MCF 10A (cell line): ENCODE measurements at regions of chr5 and their contacts with region 1.

Region 1: DNA sequence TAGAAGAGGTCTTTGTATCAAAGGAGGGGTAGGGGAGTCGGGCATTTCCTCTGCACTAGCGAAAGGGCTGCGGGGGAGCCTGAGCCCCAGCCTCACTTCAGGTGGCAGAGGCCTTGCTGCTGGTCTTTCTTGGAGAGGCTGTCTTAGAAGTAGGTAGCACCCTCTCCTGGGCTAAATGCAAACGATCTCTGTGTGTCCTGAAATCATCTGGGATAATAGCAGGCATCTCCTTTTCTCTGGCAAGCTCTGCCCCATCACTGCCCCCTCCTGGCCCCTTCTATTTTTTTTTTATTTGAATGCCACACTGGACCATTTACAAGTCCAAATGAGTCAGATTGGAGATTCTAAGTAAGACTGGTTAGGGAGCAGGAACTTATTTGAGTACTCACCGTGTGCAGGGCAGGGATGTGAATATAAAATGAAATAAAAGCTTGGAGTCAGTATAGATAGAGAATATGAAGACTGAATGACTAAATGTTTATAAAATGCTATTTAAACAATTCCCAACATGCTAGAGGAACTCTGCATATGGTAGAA is 137.1 kb downstream of the FGF1 start:
- DNase-seq: peak; percentile 97
- H3K4me3 Mint-ChIP-seq: no peak overlapping the region
- H3K27ac Mint-ChIP-seq: no peak overlapping the region
- H3K4me1 Mint-ChIP-seq: peaks cover 26% of the 10 kb centered on the region
- H3K27me3 Mint-ChIP-seq: no peaks in the 10 kb centered on the region
- CTCF ChIP-seq: peak; percentile 99

Region 2: DNA sequence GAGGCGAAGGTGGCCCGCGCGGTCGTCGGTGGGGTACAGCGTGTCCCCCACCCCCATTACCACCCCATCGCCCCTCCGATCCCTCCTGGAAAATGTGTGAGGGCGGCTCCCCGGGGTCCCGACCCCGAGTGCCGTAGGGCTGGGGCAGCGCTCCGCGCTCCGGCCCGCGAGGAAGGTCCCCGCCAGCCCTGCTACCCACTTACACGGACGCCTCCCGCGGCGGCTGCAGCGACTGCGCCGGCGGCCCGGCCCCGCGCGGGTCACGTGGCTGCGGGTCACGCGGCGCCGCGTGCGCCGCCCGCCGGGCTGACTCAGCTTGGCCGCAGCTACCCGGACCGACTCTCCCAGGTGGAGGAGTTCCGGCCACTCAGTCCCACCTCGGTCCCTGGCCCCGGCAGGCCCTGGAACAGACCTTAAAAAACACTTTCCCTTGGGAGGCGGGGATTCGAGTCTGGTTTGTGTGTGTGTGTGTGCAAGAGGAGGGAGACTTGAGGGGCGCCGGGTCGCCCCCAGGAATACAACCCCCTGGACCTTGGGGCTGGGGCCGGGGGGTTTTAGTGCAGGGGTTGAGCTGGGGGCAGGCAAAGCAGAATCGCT is 535.9 kb before region 1 on chr5 and contains the start of gene GNPDA1:
- CTCF ChIA-PET with region 1: interaction called, 3 read pairs
- POLR2A ChIA-PET with region 1: no interaction called
- intact Hi-C with region 1: loop called (anchors 5 kb)
- DNase-seq: peak; percentile 78
- H3K4me3 Mint-ChIP-seq: peak within 1 kb of the TSS; percentile 82
- H3K27ac Mint-ChIP-seq: peak within 1 kb of the TSS; percentile 82
- H3K4me1 Mint-ChIP-seq: peaks cover 35% of the 10 kb centered on the region
- H3K27me3 Mint-ChIP-seq: no peaks in the 10 kb centered on the region
- CTCF ChIP-seq: no peak
- total RNA-seq, gene GNPDA1: 36.1 and 60.9 TPM in 2 replicates

Region 3: GRCh38 chr5:142156839-142157463 is 391.9 kb before region 1 on chr5:
- CTCF ChIA-PET with region 1: interaction called, 158 read pairs
- POLR2A ChIA-PET with region 1: interaction called, 4 read pairs
- intact Hi-C with region 1: loop called (anchors 1 kb)
- DNase-seq: no peak
- H3K4me3 Mint-ChIP-seq: no peak overlapping the region
- H3K27ac Mint-ChIP-seq: no peak overlapping the region
- H3K4me1 Mint-ChIP-seq: no peaks in the 10 kb centered on the region
- H3K27me3 Mint-ChIP-seq: no peaks in the 10 kb centered on the region
- CTCF ChIP-seq: no peak

Region 4: GRCh38 chr5:142324871-142325724 is 223.7 kb before region 1 on chr5 and contains the start of gene SPRY4:
- CTCF ChIA-PET with region 1: interaction called, 49 read pairs
- POLR2A ChIA-PET with region 1: interaction called, 5 read pairs
- intact Hi-C with region 1: loop called (anchors 1 kb)
- DNase-seq: peak; percentile 100
- H3K4me3 Mint-ChIP-seq: peak within 1 kb of the TSS; percentile 76
- H3K27ac Mint-ChIP-seq: peak within 1 kb of the TSS; percentile 77
- H3K4me1 Mint-ChIP-seq: peaks cover 55% of the 10 kb centered on the region
- H3K27me3 Mint-ChIP-seq: no peaks in the 10 kb centered on the region
- CTCF ChIP-seq: peak; percentile 6
- total RNA-seq, gene SPRY4: 34.5 and 41.9 TPM in 2 replicates

Region 5: DNA sequence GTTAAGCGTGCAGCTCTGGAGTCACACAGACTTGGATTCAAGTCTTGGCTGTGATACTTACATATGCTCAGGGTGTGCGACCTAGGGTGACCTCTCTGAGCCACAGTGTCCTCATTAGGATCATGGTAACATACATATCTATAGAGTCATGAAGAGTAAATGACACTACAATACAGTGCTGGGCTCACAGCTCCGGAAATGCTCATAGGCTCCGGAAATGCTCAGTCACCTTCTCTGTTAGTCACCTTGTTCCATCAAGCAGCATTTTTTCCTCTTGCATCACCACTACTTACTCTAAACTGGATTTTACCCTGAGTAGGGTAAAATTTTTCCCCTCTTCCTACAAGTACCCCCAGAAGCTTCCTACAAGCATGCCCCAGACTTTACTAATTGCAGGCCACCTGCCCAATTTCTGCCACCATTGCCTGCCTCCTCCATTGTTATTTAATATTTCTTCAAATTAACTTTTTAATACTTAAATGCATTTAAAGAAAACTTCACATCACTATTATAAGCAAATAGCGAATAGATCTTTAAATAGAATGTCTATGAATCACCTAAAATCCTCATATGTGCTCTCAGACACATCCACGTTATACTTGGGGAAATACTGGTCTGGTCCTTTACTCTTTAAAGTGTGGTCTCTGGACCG is 76.4 kb before region 1 on chr5:
- CTCF ChIA-PET with region 1: interaction called, 5 read pairs
- POLR2A ChIA-PET with region 1: no interaction called
- intact Hi-C with region 1: loop called (anchors 2 kb)
- DNase-seq: peak; percentile 91
- H3K4me3 Mint-ChIP-seq: no peak overlapping the region
- H3K27ac Mint-ChIP-seq: peak overlapping the region; percentile 84
- H3K4me1 Mint-ChIP-seq: peaks cover 30% of the 10 kb centered on the region
- H3K27me3 Mint-ChIP-seq: no peaks in the 10 kb centered on the region
- CTCF ChIP-seq: no peak

Region 6: DNA sequence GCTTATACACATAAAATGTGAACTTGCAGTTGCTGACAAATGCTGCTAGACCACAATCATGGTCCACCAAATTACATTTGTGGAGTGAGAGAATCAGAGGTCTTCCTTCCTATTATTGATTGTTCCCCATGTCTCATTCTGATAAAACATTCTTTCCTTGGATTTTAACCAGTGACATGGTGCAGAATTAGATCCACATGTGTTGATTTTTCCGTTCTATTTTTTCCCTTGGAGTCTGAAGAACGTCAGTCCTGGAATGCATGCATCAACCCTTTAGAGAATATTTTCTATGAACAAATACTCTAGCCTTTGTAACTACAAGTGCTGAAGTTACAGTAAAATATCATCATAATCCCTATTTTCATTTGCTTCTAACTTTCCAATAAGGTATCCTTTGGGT is 53.3 kb before region 1 on chr5:
- CTCF ChIA-PET with region 1: no interaction called
- POLR2A ChIA-PET with region 1: no interaction called
- intact Hi-C with region 1: no loop called
- DNase-seq: no peak
- H3K4me3 Mint-ChIP-seq: no peak overlapping the region
- H3K27ac Mint-ChIP-seq: no peak overlapping the region
- H3K4me1 Mint-ChIP-seq: no peaks in the 10 kb centered on the region
- H3K27me3 Mint-ChIP-seq: no peaks in the 10 kb centered on the region
- CTCF ChIP-seq: no peak

Region 7: GRCh38 chr5:142737179-142737578 is 188.4 kb after region 1 on chr5:
- CTCF ChIA-PET with region 1: no interaction called
- POLR2A ChIA-PET with region 1: no interaction called
- intact Hi-C with region 1: no loop called
- DNase-seq: no peak
- H3K4me3 Mint-ChIP-seq: no peak overlapping the region
- H3K27ac Mint-ChIP-seq: no peak overlapping the region
- H3K4me1 Mint-ChIP-seq: no peaks in the 10 kb centered on the region
- H3K27me3 Mint-ChIP-seq: no peaks in the 10 kb centered on the region
- CTCF ChIP-seq: no peak

Region 8: DNA sequence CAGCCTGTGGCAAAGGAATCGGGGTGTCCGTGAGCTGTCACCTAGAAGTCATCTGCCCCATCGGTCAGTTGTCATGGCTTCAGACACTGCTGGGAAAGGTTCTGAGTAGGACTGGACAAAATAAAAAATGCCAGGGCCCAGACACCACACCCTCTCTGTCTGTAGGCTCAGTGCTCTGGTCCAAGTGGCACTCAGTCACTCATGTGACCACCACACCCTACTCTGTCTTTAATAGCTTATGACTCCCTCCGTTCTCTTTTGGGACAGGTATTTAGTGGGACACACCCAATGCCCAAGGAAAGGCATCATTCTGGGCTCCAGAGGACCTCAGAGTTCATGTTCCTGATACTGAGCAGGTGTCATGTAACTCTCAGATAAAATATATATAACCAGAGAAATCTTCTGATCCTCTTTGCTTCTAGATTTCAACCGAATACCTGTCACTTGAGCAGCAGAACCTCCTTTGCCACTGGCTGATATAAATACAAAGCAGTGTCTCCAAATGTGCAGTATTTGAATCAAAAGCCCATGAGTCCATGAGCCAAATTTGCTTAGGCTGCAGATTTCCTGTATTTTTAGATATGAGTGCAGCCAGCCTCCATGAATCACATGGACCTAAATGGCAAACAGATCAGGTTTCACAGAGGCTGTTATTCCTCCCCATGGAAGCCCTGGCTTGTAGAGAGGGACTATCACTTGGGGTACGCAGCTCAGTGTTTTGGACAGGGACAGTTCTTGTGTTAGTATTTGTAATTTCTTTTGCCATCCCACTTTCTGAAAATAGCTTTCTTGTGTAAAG is 493.4 kb after region 1 on chr5:
- CTCF ChIA-PET with region 1: no interaction called
- POLR2A ChIA-PET with region 1: no interaction called
- intact Hi-C with region 1: no loop called
- DNase-seq: no peak
- H3K4me3 Mint-ChIP-seq: no peak overlapping the region
- H3K27ac Mint-ChIP-seq: no peak overlapping the region
- H3K4me1 Mint-ChIP-seq: peaks cover 15% of the 10 kb centered on the region
- H3K27me3 Mint-ChIP-seq: no peaks in the 10 kb centered on the region
- CTCF ChIP-seq: no peak